PC-9 (cell line): ENCODE measurements at regions of chrX and their contacts with region 1.

Region 1: DNA sequence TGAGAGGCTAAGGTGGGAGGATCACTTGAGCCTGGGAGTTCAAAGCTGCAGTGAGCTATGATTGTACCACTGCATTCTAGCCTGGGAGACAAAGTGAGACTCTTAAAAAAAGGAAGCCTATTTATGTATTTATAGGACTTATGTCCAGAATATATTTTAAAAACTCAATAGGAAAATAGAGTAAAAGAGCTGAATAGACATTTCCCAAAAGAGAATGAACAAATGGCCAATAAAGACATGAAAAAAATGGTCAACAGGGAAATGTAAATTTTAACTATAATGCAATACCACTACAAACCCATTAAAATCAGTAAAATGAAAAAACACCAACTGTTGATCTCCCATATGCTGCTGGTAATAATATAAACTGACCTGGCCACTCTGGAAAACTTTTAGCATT is 115.0 kb downstream of the HUWE1 start:
- DNase-seq: no peak
- H3K4me3 ChIP-seq: no peak overlapping the region
- H3K27ac ChIP-seq: no peak overlapping the region
- H3K4me1 ChIP-seq: no peaks in the 10 kb centered on the region
- H3K27me3 ChIP-seq: no peaks in the 10 kb centered on the region
- CTCF ChIP-seq: no peak

Region 2: GRCh38 chrX:53476371-53476770 is 95.1 kb before region 1 on chrX:
- CTCF ChIA-PET with region 1: no interaction called
- POLR2A ChIA-PET with region 1: no interaction called
- intact Hi-C with region 1: no loop called
- DNase-seq: no peak
- H3K4me3 ChIP-seq: no peak overlapping the region
- H3K27ac ChIP-seq: no peak overlapping the region
- H3K4me1 ChIP-seq: no peaks in the 10 kb centered on the region
- H3K27me3 ChIP-seq: no peaks in the 10 kb centered on the region
- CTCF ChIP-seq: no peak

Region 3: DNA sequence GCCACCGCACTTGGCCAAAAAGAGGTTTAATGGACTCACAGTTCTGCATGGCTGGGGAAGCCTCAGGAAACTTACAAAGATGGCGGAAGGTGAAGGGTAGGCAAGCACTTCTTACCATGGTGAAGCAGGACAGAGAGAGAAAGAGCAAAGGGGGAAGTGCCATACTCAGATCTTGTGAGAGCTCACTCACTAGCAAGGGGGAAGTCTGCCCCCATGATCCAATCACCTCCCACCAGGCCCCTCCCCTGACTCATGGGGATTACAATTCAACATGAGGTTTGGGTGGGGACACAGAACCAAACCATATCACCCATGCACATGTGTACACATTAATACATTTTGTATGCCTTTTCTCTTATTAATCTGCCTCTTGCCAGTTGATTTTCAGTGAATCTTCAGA is 60.2 kb before region 1 on chrX:
- CTCF ChIA-PET with region 1: no interaction called
- POLR2A ChIA-PET with region 1: no interaction called
- intact Hi-C with region 1: no loop called
- DNase-seq: no peak
- H3K4me3 ChIP-seq: no peak overlapping the region
- H3K27ac ChIP-seq: no peak overlapping the region
- H3K4me1 ChIP-seq: no peaks in the 10 kb centered on the region
- H3K27me3 ChIP-seq: no peaks in the 10 kb centered on the region
- CTCF ChIP-seq: no peak

Region 4: DNA sequence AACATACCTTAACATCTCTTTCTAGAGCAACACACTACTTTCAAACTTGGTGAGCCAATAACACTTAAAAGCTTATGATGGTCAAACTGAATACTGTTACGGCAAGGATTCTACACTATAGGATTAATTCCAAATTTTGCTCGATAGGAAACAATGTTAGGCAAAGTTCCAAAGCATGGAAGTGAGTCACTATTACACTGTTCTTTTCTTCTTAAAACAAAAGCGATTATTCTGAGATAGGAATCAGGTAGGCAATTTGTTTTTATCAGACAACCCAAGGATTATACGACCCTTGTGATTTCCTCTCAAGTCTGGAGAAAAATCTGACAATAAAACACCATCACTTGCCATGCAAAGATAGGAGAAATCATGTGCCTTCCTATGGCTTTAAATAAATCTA is 33.5 kb after region 1 on chrX:
- CTCF ChIA-PET with region 1: no interaction called
- POLR2A ChIA-PET with region 1: no interaction called
- intact Hi-C with region 1: loop called (anchors 5 kb)
- DNase-seq: no peak
- H3K4me3 ChIP-seq: no peak overlapping the region
- H3K27ac ChIP-seq: no peak overlapping the region
- H3K4me1 ChIP-seq: no peaks in the 10 kb centered on the region
- H3K27me3 ChIP-seq: no peaks in the 10 kb centered on the region
- CTCF ChIP-seq: no peak